H1 (cell line): ENCODE measurements at regions of chr5 and their contacts with region 1.

Region 1: DNA sequence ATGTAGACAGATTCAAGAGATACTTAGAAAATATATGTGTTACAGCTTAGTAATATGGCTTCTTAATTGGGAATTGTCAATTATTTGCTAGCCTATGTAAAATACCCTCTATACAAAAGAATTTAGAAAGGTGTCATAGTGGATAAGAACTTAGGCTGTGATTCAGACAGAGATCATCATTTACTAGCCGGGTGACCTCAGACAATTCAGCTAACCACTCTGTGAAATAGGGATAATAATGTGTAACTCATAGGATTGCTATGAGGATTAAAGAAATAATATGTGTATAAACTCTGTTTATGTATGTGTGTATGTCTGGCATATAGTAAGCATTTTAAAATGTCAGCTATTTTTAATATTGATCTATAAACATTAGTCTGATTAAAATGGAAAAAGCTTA is 5.9 kb upstream of the LARS1 start:
- DNase-seq: no peak
- H3K4me3 ChIP-seq: no peak overlapping the region
- H3K27ac ChIP-seq: no peak overlapping the region
- H3K4me1 ChIP-seq: no peaks in the 10 kb centered on the region
- H3K27me3 ChIP-seq: no peaks in the 10 kb centered on the region
- CTCF ChIP-seq: no peak
- EP300 ChIP-seq: no peak
- POLR2A ChIP-seq: no peak
- RAD21 ChIP-seq: no peak

Region 2: DNA sequence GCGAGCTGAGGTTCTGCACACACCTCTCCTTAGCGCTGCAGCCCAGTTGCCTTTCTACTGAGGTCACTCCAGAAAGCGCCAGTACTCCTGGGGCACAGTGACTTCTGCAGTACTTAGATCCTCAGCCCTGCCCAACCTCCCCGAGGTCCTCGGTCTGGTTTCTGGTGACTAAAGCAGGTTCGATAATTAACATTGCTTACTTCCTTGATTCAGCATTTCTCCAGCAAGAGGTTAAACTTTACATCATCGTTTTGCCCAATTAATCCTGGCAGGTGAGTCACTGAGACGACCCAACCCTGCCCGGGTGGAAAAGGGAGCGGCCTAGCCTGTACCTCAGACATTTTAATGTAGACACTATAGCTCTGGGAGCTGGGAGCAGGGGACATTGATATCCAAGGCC is 160.6 kb before region 1 on chr5:
- CTCF ChIA-PET with region 1: no interaction called
- POLR2A ChIA-PET with region 1: no interaction called
- DNase-seq: no peak
- H3K4me3 ChIP-seq: no peak overlapping the region
- H3K27ac ChIP-seq: no peak overlapping the region
- H3K4me1 ChIP-seq: peaks cover 2 to 31% (median 13%) of the 10 kb centered on the region in 4 experiments
- H3K27me3 ChIP-seq: no peaks in the 10 kb centered on the region
- CTCF ChIP-seq: no peak
- EP300 ChIP-seq: no peak
- POLR2A ChIP-seq: no peak
- RAD21 ChIP-seq: no peak

Region 3: GRCh38 chr5:146173597-146173996 is 14.8 kb before region 1 on chr5:
- CTCF ChIA-PET with region 1: no interaction called
- POLR2A ChIA-PET with region 1: interaction called, 10 read pairs
- DNase-seq: no peak
- H3K4me3 ChIP-seq: no peak overlapping the region
- H3K27ac ChIP-seq: no peak overlapping the region
- H3K4me1 ChIP-seq: no peaks in the 10 kb centered on the region
- H3K27me3 ChIP-seq: no peaks in the 10 kb centered on the region
- CTCF ChIP-seq: no peak
- EP300 ChIP-seq: no peak
- POLR2A ChIP-seq: no peak
- RAD21 ChIP-seq: no peak

Region 4: DNA sequence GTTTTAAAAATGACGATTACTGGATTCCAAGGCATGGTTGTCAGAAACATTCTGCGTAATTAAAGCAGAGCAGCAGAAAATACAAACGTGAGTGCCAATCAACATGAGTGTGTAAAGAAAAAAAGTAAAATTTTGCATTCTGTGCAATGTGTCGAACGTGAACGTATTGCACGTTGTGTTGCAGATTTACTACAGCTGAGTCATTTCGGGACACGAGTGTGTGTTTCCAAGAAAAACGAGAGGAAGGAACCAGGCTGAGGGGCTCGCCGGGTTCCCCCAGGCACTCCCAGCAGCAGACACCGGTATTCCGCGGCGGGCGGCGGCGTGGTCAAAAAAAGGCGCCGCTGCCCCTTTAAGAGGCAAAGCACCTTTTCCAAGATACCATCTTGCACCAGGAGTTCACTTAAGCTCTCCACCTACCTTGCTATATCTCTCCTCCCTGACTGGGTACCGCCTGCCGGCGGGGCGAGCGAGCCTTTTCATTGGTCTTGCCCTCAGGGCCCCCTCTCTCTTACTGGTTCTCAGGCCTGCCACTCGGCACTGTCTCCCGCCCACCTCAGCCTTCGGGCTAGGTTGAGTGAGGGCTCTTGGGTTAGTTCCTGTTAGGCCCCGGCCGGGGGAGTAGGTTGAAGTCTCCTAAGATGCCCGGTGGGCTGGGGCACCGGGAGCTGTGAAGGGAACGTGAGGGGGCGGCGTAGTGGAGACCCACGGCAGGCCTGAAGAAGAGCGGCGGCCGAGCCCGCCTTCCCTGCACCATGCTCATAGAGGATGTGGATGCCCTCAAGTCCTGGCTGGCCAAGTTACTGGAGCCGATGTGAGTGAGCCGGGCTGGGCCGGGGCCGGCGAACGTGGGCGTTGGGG is 14.9 kb after region 1 on chr5 and contains the start of gene RBM27:
- CTCF ChIA-PET with region 1: interaction called, 4 read pairs
- POLR2A ChIA-PET with region 1: interaction called, 67 read pairs
- DNase-seq: peak; percentile 99 to 100
- H3K4me3 ChIP-seq: peak within 1 kb of the TSS; percentile 74 to 95 (median 85)
- H3K27ac ChIP-seq: peak within 1 kb of the TSS; percentile 67; the same call in 1 of the 2 replicates
- H3K4me1 ChIP-seq: peaks cover 0 to 3% (median 0%) of the 10 kb centered on the region in 4 experiments; a peak in 2 of 7 replicates
- H3K27me3 ChIP-seq: no peaks in the 10 kb centered on the region
- CTCF ChIP-seq: no peak
- EP300 ChIP-seq: no peak
- POLR2A ChIP-seq: peak; percentile 63 to 85
- RAD21 ChIP-seq: no peak
- total RNA-seq, gene RBM27: 42.9 and 44.9 TPM in 2 replicates